ENCODE measurements at regions of chr19 and their contacts with region 1.

Region 1: GRCh38 chr19:35066691-35067563 is 25.4 kb downstream of the HPN start:
- DNase-seq: peak; percentile 74
- H3K4me3 ChIP-seq: no peak overlapping the region
- H3K27ac ChIP-seq: no peak overlapping the region
- H3K4me1 ChIP-seq: peaks cover 6% of the 10 kb centered on the region
- H3K27me3 ChIP-seq: no peaks in the 10 kb centered on the region
- CTCF ChIP-seq: peak; percentile 93 to 97

Region 2: DNA sequence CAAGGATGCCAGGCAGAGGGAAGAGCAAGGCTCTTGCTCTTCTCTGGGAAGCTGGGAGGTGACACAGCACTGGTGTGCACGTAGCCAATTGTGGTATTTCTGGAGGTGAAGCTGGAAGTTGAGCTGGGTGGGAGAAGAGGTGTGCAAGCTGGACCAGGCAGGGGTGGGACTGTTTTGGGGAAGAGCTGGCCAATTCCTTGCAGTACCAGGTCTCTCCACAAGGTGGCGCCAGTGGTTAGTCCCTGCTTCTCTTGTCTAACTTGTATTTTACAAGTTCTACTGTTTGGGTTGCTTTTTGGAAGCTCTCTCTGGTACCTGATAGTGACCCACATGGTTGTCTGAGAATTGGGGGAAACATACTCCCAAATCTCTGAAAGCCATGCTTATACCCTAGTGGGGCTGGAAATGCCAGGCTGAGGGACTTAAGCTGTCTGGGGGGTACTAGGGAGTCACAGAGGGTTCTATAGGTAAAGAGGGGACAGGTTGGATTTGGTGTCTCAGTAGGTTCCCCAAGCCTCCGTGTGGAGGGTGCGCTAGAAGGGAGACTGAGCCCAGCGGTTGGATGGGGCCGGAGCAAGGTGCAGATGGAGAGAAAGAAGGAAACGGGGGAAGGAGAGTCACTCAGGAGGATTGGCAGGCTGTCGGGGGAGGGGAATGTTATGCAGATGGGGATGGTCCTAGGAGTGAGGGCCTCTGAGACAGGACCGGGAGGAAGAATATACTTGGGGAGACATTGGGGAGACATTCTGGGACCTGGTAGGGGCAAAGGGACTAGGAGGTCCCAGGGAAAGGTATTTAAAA is 22.4 kb before region 1 on chr19:
- CTCF ChIA-PET with region 1: no interaction called
- dilution Hi-C with region 1: no loop called
- in situ Hi-C with region 1: no loop called
- intact Hi-C with region 1: loop called (anchors 2 kb)
- DNase-seq: peak; percentile 48
- H3K4me3 ChIP-seq: no peak overlapping the region
- H3K27ac ChIP-seq: no peak overlapping the region
- H3K4me1 ChIP-seq: peaks cover 11% of the 10 kb centered on the region
- H3K27me3 ChIP-seq: no peaks in the 10 kb centered on the region
- CTCF ChIP-seq: peak; percentile 93 to 96

Region 3: GRCh38 chr19:35114353-35115176 is 47.6 kb after region 1 on chr19:
- CTCF ChIA-PET with region 1: interaction called, 10 read pairs
- dilution Hi-C with region 1: no loop called
- in situ Hi-C with region 1: no loop called
- intact Hi-C with region 1: loop called (anchors 1 kb)
- DNase-seq: peak; percentile 68
- H3K4me3 ChIP-seq: peak overlapping the region; percentile 75 to 94 (median 89)
- H3K27ac ChIP-seq: peak overlapping the region; percentile 91
- H3K4me1 ChIP-seq: peaks cover 50% of the 10 kb centered on the region
- H3K27me3 ChIP-seq: no peaks in the 10 kb centered on the region
- CTCF ChIP-seq: peak; percentile 99 to 100

Region 4: DNA sequence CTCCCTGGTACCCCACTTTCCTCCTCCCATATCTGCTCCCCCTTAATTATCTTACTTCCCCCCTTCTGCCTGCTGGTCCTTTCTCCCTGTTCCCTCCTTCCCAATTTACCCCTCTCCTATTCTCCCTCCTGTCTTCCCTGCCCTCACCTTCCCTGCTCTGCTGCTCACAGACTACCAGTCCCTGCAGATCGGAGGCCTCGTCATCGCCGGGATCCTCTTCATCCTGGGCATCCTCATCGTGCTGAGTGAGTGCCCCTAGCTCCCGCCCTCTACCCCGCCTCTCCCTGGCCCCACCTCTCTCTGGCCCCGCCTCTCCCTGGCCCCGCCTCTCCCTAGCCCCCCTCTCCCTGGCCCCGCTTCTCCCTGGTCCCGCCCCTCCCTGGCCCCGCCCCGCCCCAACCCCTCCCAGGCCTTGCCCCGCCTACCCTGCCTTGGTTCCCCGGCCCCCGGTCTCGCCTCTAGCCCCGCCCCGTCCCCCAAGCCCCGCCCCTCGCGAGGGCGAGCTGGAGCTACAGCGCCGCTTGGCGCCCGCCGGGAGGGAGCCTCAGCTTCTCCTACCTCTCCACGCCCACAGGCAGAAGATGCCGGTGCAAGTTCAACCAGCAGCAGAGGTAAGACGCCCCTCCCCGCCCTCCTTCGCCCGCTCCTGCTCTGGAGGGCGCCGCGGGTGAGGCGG is 74.2 kb after region 1 on chr19:
- CTCF ChIA-PET with region 1: interaction called, 12 read pairs
- dilution Hi-C with region 1: no loop called
- in situ Hi-C with region 1: loop called in 1 of 2 experiments (anchors 5 kb)
- intact Hi-C with region 1: loop called (anchors 1 kb)
- DNase-seq: peak; percentile 88
- H3K4me3 ChIP-seq: peak overlapping the region in 1 of 3 experiments; percentile 26
- H3K27ac ChIP-seq: no peak overlapping the region
- H3K4me1 ChIP-seq: peaks cover 33% of the 10 kb centered on the region
- H3K27me3 ChIP-seq: no peaks in the 10 kb centered on the region
- CTCF ChIP-seq: peak; percentile 19 to 79

Region 5: GRCh38 chr19:35269421-35270117 is 202.6 kb after region 1 on chr19:
- CTCF ChIA-PET with region 1: no interaction called
- dilution Hi-C with region 1: no loop called
- in situ Hi-C with region 1: no loop called
- intact Hi-C with region 1: loop called (anchors 1 kb)
- DNase-seq: peak; percentile 70
- H3K4me3 ChIP-seq: peak overlapping the region; percentile 15 to 72 (median 62)
- H3K27ac ChIP-seq: no peak overlapping the region
- H3K4me1 ChIP-seq: peaks cover 37% of the 10 kb centered on the region
- H3K27me3 ChIP-seq: no peaks in the 10 kb centered on the region
- CTCF ChIP-seq: peak; percentile 26 to 61